Heart left ventricle (tissue), 16 donors: ENCODE measurements at regions of chr11 and their contacts with region 1.

Region 1: DNA sequence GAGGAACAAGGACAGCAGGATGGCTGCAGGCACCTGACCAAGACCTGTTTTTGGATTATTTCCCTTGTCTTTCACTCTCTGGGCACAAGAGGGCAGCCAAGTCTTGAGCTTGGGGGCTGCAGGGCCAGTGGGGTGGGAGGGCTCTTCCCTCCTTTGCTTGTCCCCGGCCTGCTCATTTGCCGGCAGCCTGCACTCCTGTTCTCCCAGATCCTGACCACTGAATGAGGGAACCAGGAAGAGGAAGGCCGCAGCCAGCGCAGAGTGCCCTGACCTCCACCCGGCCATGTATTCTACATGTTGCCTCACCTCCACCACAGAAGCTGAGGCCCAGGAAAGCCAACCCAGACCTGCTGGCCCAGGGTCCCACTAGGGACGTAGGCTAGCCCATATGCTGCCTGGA is 15.5 kb upstream of the NNMT start:
- DNase-seq: peak; percentile 55 to 69 (median 64)
- ATAC-seq: peak; percentile 48 to 92 (median 80)
- H3K4me3 ChIP-seq: no peak overlapping the region
- H3K27ac ChIP-seq: peak overlapping the region in 6 of 12 donors; percentile 30 to 67 (median 48)
- H3K4me1 ChIP-seq: peaks cover 0 to 27% (median 14%) of the 10 kb centered on the region in 12 donors
- H3K27me3 ChIP-seq: no peaks in the 10 kb centered on the region
- CTCF ChIP-seq: peak; percentile 41 to 81 (median 70)
- POLR2A ChIP-seq: peak in 1 of 2 donors; percentile 23

Region 2: DNA sequence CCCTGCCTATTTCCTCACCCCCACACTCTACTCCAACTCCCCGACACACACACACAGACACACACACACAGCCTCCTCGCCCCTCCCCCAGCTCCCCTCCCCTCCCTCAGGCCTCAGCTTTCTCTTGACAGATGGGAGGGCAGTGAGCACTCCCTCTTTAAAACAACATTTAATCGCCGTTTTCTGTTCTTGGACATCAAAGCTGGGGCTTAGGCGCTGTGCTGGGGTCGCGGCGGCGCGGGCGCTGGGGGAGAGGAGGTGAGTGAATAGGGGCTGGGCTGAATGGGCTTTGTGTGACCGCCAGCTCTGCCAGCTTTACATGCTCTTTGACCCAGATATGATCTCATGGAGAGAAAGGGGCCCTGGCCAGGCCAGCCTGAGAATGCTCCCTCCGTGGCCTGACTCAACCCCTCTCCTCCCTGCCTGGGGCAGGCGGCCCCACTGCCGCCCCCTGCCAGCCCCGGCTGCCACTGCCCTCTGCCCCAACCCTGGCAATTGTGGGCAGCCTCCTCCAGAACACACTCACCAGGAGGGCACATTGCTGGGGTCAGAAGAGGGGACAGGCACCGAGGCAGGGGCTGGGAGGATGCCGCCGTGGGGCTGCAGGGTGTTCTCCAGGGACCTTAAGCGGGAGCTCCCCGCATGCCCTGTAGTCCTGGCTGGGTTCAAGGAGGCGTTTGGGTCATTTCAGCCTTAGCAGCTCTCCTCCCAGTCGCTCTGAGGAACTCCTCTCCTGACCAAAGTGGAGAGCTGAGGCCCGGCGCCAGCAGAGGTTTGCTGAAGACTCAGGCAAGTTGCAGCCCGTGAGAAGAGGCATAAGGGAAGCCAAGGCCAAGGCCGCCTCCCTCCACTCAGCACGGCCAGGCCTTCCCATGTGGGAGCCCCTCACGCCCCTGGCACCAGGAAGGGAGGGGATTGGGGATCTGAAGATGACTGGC is 22.8 kb before region 1 on chr11:
- intact Hi-C with region 1: no loop called
- DNase-seq: peak; percentile 39 to 76 (median 69)
- ATAC-seq: peak; percentile 13 to 68 (median 52)
- H3K4me3 ChIP-seq: peak overlapping the region in 9 of 12 donors; percentile 5 to 39 (median 26)
- H3K27ac ChIP-seq: peak overlapping the region; percentile 47 to 85 (median 75)
- H3K4me1 ChIP-seq: peaks cover 0 to 87% (median 47%) of the 10 kb centered on the region in 12 donors
- H3K27me3 ChIP-seq: no peaks in the 10 kb centered on the region
- CTCF ChIP-seq: peak in 8 of 12 donors; percentile 21 to 55 (median 36)
- POLR2A ChIP-seq: no peak

Region 3: DNA sequence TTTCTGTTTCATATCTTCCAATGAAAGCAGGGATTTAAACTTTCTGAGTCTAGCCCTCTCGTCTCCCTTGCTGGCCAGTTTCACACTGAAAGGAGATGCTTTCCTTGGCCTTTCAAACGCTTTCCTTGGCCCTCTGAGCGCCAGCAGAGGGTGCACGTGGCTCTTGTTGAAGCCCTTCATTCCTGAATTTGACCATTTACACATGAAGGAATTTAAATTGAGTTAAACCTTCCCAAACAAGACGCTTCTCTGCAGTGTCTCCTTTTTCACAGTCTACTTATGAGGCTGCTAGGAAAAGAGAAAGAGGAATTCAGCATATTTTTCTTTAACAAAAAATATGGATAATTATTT is 37.1 kb after region 1 on chr11:
- intact Hi-C with region 1: loop called in 2 of 10 experiments (anchors 5 kb)
- DNase-seq: peak in 3 of 5 donors; percentile 29 to 60 (median 32)
- ATAC-seq: peak in 3 of 4 donors; percentile 38 to 65 (median 59)
- H3K4me3 ChIP-seq: no peak overlapping the region
- H3K27ac ChIP-seq: peak overlapping the region in 10 of 12 donors; percentile 8 to 72 (median 40)
- H3K4me1 ChIP-seq: peaks cover 0 to 34% (median 14%) of the 10 kb centered on the region in 12 donors
- H3K27me3 ChIP-seq: peaks cover 0 to 4% (median 0%) of the 10 kb centered on the region in 9 donors
- CTCF ChIP-seq: peak in 10 of 12 donors; percentile 11 to 69 (median 46)
- POLR2A ChIP-seq: no peak

Region 4: DNA sequence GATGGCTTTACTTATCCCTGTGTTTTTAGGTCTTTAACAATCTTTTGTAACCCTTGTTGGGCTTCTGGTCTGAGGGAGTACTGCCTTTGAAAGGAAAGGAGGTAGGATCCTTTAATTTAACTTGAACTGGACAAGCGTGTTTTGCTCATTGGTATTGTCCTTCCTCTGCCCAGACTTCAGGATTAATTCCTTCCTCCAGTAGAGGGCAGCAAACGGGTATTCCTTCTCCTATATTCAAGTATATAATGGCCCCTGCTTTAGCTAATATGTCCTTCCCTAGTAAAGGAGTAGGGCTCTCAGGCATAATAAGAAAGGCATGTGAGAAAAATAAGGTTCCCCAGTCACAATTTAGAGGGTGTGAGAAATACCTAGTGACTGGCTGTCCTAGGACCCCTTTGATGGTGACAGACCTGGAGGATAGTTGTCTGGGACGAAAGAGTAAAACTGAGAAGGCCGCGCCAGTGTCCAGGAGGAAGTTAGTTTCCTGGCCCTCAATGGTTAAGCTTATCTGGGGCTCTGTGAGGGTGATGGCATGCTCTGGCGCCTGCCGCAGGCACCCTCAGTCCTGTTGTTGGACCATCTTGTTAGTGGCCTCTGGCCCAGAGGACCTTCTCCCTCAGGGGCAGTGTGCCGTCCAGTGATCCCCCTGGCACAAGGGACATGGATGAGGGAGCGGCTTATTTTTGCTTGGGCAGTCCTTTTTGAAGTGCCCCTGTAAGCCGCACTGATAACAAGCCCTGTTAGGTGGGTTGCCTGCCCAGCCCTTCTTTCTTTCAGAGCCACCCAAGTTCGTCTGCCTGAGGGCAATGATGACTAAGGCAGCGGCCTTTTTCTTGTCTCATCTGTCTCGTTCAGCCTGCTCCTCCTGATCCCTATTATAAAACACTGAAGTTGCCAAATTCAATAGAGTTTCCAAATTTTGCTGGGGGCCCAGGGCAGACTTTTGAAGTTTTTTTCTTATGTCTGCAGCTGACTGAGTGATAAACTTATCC is 67.8 kb after region 1 on chr11:
- intact Hi-C with region 1: loop called in 4 of 10 experiments (anchors 5 to 10 kb)
- DNase-seq: peak in 2 of 5 donors; percentile 25 to 34
- ATAC-seq: peak in 3 of 4 donors; percentile 69 to 77 (median 72)
- H3K4me3 ChIP-seq: no peak overlapping the region
- H3K27ac ChIP-seq: no peak overlapping the region
- H3K4me1 ChIP-seq: peaks cover 0 to 3% (median 0%) of the 10 kb centered on the region in 12 donors
- H3K27me3 ChIP-seq: no peaks in the 10 kb centered on the region
- CTCF ChIP-seq: peak; percentile 41 to 73 (median 57)
- POLR2A ChIP-seq: no peak

Region 5: GRCh38 chr11:114400217-114400914 is 119.7 kb after region 1 on chr11 and contains the starts of genes C11orf71 and RBM7:
- intact Hi-C with region 1: loop called in 2 of 10 experiments (anchors 10 kb)
- DNase-seq: peak; percentile 98 to 100 (median 99)
- ATAC-seq: peak; percentile 97 to 99 (median 98)
- H3K4me3 ChIP-seq: peak within 1 kb of the TSS; percentile 63 to 94 (median 76)
- H3K27ac ChIP-seq: peak within 1 kb of the TSS; percentile 89 to 100 (median 98)
- H3K4me1 ChIP-seq: peaks cover 0 to 69% (median 53%) of the 10 kb centered on the region in 12 donors
- H3K27me3 ChIP-seq: no peaks in the 10 kb centered on the region
- CTCF ChIP-seq: peak in 2 of 12 donors; percentile 12 to 13
- POLR2A ChIP-seq: peak in 1 of 2 donors; percentile 92
- total RNA-seq, gene C11orf71: 5.1 to 13.4 (median 8.6) TPM
- total RNA-seq, gene RBM7: 8.8 to 28.7 (median 20.8) TPM

Region 6: DNA sequence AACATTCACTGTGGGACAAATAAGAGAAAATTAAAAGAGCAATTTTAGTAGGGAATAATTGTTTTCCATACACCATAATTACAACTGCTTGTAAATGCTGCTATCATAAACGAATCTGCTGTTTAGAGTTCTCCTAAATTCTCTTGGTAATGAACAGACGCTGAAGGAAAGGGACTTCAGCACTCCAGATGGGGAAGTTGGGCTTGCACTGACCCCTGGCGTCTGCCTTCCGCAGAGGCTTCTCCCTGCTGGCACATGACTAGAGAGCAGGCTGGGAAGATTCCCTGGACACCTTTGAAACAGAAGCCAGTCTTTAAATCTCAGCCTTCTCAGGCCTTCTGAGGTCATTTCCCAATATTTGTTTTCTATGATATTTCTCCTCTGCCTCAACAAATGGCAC is 481.7 kb after region 1 on chr11:
- intact Hi-C with region 1: loop called in 8 of 10 experiments (anchors 2 to 10 kb)
- DNase-seq: peak; percentile 41 to 74 (median 59)
- ATAC-seq: peak in 3 of 4 donors; percentile 85 to 88 (median 85)
- H3K4me3 ChIP-seq: no peak overlapping the region
- H3K27ac ChIP-seq: no peak overlapping the region
- H3K4me1 ChIP-seq: no peaks in the 10 kb centered on the region
- H3K27me3 ChIP-seq: no peaks in the 10 kb centered on the region
- CTCF ChIP-seq: peak; percentile 54 to 81 (median 68)
- POLR2A ChIP-seq: no peak